A673 (cell line): ENCODE measurements at regions of chr1 and their contacts with region 1.

Region 1: DNA sequence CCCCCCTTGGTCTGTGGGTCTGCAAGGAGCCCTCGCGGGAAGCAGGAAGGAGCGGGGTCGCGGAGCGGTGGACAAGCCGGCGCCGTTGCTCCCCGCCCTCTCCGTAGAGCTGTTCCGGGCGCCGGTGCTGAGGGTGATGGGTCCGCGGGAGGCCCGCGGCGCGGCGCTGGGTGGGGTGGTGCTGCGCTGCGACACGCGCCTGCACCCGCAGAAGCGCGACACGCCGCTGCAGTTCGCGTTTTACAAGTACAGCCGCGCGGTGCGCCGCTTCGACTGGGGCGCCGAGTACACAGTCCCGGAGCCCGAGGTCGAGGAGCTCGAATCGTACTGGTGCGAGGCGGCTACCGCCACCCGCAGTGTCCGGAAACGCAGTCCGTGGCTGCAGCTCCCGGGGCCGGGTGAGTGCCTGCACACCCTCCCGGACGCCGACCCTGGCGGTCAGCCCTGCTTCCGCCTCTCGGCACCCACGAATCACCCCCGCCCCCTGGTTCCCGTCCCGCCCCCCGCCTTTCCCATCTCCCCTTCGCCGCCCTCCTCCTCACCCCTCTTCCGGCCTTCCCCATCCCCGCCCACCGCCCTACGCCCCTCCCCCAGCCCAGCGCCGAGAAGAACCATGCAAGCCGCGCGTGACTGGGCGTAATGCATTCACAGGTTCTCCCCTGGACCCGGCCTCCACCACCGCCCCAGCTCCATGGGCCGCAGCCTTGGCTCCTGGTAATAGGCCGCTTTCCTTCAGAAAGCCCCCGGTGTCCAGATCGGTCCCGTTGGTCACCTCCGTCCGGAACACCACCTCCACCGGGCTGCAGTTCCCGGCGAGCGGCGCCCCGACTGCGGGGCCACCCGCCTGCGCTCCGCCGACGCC is 5.5 kb downstream of the FCRLB start:
- DNase-seq: peak; percentile 91
- H3K4me3 ChIP-seq: peak overlapping the region; percentile 88
- H3K27ac ChIP-seq: peak overlapping the region; percentile 78
- H3K4me1 ChIP-seq: no peaks in the 10 kb centered on the region
- H3K27me3 ChIP-seq: no peaks in the 10 kb centered on the region
- CTCF ChIP-seq: no peak

Region 2: GRCh38 chr1:161688946-161689345 is 37.9 kb before region 1 on chr1:
- CTCF ChIA-PET with region 1: no interaction called
- POLR2A ChIA-PET with region 1: no interaction called
- intact Hi-C with region 1: loop called (anchors 5 kb)
- DNase-seq: no peak
- H3K4me3 ChIP-seq: no peak overlapping the region
- H3K27ac ChIP-seq: no peak overlapping the region
- H3K4me1 ChIP-seq: no peaks in the 10 kb centered on the region
- H3K27me3 ChIP-seq: peaks cover 5% of the 10 kb centered on the region
- CTCF ChIP-seq: no peak

Region 3: DNA sequence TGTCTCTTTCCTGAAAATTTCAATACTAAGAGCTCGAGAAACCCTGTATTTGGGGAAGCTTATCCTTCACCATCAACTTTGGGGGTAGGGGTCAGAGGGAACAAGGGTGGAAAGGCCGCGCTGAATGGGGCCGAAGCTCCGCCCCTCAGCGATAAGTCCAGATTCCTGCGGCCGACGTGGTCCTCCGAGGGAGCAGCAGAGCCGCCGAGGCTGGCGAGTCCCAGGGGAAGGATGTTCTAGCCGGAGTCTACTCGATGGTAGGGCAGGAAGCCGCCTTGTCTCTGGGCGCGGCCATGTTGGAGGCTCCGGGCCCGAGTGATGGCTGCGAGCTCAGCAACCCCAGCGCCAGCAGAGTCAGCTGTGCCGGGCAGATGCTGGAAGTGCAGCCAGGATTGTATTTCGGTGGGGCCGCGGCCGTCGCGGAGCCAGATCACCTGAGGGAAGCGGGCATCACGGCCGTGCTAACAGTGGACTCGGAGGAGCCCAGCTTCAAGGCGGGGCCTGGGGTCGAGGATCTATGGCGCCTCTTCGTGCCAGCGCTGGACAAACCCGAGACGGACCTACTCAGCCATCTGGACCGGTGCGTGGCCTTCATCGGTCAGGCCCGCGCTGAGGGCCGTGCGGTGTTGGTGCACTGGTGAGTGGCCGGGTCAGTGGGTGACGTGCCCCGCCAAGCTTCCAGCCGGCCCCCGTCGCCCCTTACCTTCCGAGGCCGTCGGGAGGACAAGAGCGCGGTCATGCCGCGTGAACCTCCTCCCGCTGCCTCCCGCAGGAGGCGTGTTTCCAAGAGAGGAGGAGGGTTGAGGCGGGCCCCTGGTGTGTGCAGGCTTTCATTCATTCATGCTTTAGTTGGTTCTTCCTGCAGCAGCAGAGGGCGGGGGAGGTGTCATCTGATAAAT is 22.9 kb after region 1 on chr1 and contains the start of gene DUSP12:
- CTCF ChIA-PET with region 1: no interaction called
- POLR2A ChIA-PET with region 1: no interaction called
- intact Hi-C with region 1: loop called (anchors 2 kb)
- DNase-seq: peak; percentile 98
- H3K4me3 ChIP-seq: peak within 1 kb of the TSS; percentile 74
- H3K27ac ChIP-seq: peak within 1 kb of the TSS; percentile 87
- H3K4me1 ChIP-seq: peaks cover 12% of the 10 kb centered on the region
- H3K27me3 ChIP-seq: no peaks in the 10 kb centered on the region
- CTCF ChIP-seq: peak; percentile 50
- total RNA-seq, gene DUSP12: 62.9 and 63.6 TPM in 2 replicates